Activated CD4-positive, alpha-beta T cell treated with anti-CD3 and anti-CD28 coated beads for 36 hours (primary cell): ENCODE measurements at regions of chr17 and their contacts with region 1.

Region 1: DNA sequence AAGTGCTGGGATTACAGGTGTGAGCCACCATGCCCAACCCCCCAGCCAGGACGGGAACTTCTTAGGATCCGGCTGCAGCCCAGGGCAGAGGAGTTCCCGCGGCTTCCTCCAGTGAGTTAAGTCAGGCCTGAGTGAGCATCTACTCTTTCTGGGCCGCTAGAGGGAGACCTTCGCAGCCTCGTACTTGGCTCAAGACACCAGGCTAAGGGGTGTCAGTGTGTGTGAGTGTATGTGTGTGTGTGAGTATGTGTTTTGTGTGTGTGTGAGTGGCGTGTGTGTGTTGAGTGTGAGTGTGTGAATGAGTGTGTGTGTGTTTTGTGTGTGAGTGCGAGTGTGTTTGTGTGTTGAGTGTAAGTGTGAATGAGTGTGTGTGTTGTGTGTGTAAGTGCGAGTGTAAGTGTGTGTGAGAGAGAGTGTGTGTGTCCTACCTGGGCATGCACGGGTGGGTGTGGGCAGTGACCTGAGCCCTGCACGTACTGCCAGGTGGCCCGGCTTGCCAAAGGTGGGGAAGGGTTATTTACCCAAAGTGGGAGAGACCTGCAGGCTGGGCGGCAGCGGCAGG is 58.5 kb downstream of the TMEM235 start:
- DNase-seq: peak; percentile 86
- ATAC-seq: peak; percentile 100
- H3K4me3 Mint-ChIP-seq: no peak overlapping the region
- H3K27ac Mint-ChIP-seq: no peak overlapping the region
- H3K4me1 Mint-ChIP-seq: peaks cover 6% of the 10 kb centered on the region
- H3K27me3 Mint-ChIP-seq: no peaks in the 10 kb centered on the region

Region 2: DNA sequence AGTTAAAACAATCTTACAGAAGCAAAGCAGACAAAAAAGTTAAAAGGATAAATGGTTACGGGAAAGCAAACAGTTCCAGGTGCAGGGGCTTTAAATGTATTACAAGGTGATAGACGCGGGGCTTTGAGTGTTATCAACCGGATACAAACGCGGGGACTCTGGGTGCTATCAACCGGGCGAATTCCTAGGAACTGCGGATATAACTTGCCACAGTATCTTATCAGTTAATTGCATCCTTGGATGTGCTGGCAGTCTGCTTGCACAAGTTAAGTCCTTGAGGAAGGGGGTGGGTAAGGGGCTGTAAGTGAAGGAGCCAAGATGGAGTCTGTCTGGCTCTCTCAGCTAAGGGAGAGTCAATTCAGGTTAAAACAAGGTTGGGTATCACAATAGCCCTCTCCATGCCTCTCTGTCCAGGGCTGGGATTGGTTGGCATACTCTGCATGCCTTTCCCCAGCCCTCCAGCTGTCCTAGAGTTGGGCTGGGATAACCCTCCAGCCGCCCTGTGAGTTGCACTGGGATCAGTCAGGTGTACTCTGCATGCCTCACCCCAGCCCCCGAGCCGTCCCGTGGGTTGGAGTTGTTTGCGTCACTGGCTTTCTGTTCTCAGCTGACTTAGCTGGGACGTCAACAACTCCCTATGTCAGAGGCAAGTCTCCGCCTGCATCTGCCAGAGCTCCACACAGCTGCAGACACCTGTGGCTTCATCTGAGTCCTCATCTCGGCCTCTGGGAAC is 17.5 kb before region 1 on chr17:
- CTCF ChIA-PET with region 1: interaction called, 16 read pairs
- POLR2A ChIA-PET with region 1: no interaction called
- intact Hi-C with region 1: no loop called
- DNase-seq: peak; percentile 86
- ATAC-seq: peak; percentile 94
- H3K4me3 Mint-ChIP-seq: no peak overlapping the region
- H3K27ac Mint-ChIP-seq: peak overlapping the region; percentile 31
- H3K4me1 Mint-ChIP-seq: peaks cover 36% of the 10 kb centered on the region
- H3K27me3 Mint-ChIP-seq: no peaks in the 10 kb centered on the region

Region 3: DNA sequence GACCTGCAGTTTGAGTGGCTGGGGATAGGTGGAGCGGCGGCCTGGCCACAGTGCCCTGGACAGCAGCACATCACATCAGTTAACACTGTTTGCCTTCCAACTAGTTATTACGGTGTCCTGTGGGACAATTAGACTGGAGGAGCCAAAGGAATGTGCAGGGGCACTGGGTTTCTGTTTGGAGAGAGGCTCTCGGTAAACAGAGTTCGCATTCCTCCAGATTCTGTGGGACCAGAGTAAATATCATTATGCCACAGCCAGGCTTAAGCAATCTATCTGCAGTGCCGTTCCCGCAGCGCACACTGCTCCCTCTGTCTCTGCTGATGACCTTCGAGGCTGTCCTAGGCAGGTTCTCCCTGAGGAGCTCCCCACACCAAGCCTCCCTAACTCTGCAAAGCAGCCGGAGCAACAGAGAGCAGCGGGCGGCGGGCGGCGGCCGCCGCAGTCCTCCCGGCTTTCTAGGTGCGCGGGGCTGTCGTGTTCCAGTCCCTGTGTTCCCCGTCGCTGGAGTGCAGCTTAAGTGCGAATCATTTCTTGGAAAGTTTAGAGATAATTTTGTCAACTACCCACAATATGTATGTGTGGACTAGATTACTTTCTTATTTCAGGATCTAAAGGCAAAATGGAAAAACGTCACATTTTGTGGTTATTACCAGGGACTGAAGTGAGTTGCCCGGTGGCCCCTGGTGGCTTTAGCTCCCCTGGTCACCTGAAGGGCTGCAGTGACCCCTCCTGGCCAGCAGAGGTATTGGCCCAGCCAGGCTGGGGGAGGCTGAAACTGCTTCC is 131.8 kb after region 1 on chr17:
- CTCF ChIA-PET with region 1: interaction called, 9 read pairs
- POLR2A ChIA-PET with region 1: no interaction called
- intact Hi-C with region 1: loop called (anchors 2 to 5 kb)
- DNase-seq: peak; percentile 85
- ATAC-seq: peak; percentile 86
- H3K4me3 Mint-ChIP-seq: no peak overlapping the region
- H3K27ac Mint-ChIP-seq: peak overlapping the region; percentile 34
- H3K4me1 Mint-ChIP-seq: peaks cover 38% of the 10 kb centered on the region
- H3K27me3 Mint-ChIP-seq: no peaks in the 10 kb centered on the region

Region 4: GRCh38 chr17:78448356-78448993 is 158.6 kb after region 1 on chr17:
- CTCF ChIA-PET with region 1: no interaction called
- POLR2A ChIA-PET with region 1: no interaction called
- intact Hi-C with region 1: no loop called
- DNase-seq: peak; percentile 33
- ATAC-seq: peak; percentile 19
- H3K4me3 Mint-ChIP-seq: no peak overlapping the region
- H3K27ac Mint-ChIP-seq: no peak overlapping the region
- H3K4me1 Mint-ChIP-seq: no peaks in the 10 kb centered on the region
- H3K27me3 Mint-ChIP-seq: no peaks in the 10 kb centered on the region

Region 5: DNA sequence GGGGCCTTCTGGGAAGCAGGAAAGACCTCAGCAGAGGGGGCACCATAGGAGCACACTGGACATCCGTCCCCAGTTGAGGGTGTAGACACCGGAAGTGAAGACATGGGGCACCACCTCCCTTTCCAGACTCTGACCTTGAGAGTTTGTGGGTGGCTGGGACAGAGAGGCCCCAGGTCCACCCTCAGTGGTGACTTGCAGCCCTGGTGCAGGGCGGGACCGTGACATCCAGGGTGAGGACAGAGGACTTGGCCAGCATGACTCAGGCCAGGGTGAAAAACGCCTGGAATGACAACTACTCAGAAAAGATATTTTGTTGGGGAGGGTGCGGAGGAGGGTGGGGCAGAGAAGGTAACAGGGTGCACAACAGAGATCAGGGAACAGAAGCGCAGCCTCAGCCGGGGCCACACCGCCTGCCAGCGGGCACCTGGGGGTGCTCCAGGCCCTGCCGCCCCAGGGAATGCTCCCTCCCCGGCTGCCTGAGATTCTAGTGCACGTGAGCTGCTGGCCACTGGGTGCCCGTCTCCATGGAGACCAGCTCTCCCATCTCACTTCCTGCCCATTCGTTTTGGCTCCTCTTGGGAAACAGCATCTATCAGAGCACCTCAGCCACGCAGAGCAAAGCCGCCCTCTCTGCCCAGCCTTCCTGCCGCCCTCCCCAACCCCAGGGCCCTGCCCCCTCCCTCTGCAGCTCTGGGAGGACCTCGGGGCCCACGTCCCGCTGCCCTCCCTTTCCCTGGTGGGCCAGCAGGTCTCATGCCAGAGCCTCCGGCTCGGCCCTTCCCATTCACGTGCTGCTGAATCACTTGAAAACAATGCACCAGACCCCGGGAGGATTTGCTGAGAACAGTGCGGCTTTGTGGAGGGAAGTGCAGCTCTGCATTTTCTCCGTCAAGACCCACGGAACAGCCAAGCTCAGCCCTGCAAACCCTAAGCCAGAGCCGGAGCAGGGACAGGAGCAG is 593.6 kb after region 1 on chr17:
- CTCF ChIA-PET with region 1: no interaction called
- POLR2A ChIA-PET with region 1: interaction called, 13 read pairs
- intact Hi-C with region 1: no loop called
- DNase-seq: peak; percentile 18
- ATAC-seq: peak; percentile 32
- H3K4me3 Mint-ChIP-seq: no peak overlapping the region
- H3K27ac Mint-ChIP-seq: peak overlapping the region; percentile 72
- H3K4me1 Mint-ChIP-seq: peaks cover 27% of the 10 kb centered on the region
- H3K27me3 Mint-ChIP-seq: no peaks in the 10 kb centered on the region

Region 6: DNA sequence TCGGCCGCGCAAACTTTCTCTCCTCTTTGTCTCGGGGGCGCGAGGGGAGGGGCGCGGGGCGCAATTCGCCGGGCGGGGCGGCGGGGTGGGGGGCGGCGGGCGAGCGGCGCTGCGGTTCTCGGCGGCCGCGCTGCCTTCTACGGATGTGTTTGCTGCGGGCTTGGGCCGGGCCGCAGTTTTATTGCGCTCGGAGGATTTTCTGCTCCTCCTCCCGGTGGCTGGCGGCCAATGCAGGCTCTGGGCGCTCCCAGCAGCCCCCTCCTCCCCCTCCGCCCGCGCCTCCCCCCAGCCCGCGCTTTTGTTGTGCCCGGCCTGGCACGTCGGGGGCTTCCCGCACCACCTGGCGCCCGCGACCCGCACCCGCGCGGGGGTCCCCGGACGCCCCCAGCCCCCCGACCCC is 635.4 kb after region 1 on chr17 and contains the start of gene TIMP2:
- CTCF ChIA-PET with region 1: no interaction called
- POLR2A ChIA-PET with region 1: no interaction called
- intact Hi-C with region 1: no loop called
- DNase-seq: peak; percentile 83
- ATAC-seq: peak; percentile 86
- H3K4me3 Mint-ChIP-seq: peak within 1 kb of the TSS; percentile 45
- H3K27ac Mint-ChIP-seq: no peak within 1 kb of the TSS
- H3K4me1 Mint-ChIP-seq: peaks cover 9% of the 10 kb centered on the region
- H3K27me3 Mint-ChIP-seq: peaks cover 4% of the 10 kb centered on the region
- total RNA-seq, gene TIMP2: 1.6 to 1.9 TPM